Mammary epithelial cell (primary cell): ENCODE measurements at regions of chr9 and their contacts with region 1.

Region 1: DNA sequence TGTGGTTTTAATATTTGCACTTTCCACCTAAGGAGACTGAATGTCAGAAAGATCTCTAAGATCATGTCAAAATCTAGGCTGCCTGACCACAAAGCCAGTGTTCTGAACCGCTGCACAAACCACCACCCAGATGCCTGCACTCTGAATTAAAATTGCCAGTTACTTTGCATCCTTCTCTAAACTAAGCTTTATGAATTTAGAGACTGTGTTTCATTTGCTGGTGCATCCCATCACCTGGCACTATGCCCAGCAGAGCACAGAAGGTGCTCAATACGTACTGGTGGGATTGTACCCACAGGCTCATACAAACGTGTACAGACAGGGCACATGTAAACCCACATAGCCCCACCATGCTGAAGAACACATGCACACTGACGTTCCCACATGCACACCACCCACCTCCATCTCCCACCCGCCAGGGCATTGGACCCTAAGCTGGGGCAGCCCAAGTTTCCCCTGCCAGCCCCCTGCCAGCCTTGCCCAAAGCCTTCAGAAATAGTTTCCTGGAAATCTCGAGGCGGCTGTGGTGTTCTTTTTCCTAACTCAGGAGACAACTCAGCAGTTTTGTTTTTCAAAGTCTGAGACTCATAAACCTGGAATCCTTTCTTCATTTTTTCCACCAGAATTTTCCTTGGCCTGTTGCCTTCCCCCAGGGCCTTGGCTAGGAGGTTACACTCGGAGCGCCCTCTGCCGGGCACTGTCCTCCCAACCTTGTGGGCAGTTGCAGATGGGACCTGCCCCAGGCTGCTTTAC is 9.6 kb upstream of the TRAF1 start:
- DNase-seq: peak; percentile 89
- H3K4me3 ChIP-seq: peak overlapping the region; percentile 10 to 34 (median 16)
- H3K27ac ChIP-seq: peak overlapping the region; percentile 84
- H3K4me1 ChIP-seq: peaks cover 44% of the 10 kb centered on the region
- H3K27me3 ChIP-seq: no peaks in the 10 kb centered on the region
- CTCF ChIP-seq: peak; percentile 88 to 96

Region 2: GRCh38 chr9:120610975-120611689 is 325.1 kb before region 1 on chr9:
- CTCF ChIA-PET with region 1: interaction called, 3 read pairs
- dilution Hi-C with region 1: no loop called
- in situ Hi-C with region 1: loop called in 1 of 2 experiments (anchors 25 kb)
- intact Hi-C with region 1: loop called (anchors 1 kb)
- DNase-seq: peak; percentile 83
- H3K4me3 ChIP-seq: no peak overlapping the region
- H3K27ac ChIP-seq: peak overlapping the region; percentile 74
- H3K4me1 ChIP-seq: peaks cover 52% of the 10 kb centered on the region
- H3K27me3 ChIP-seq: no peaks in the 10 kb centered on the region
- CTCF ChIP-seq: peak; percentile 43 to 45

Region 3: GRCh38 chr9:120755827-120756434 is 180.3 kb before region 1 on chr9:
- CTCF ChIA-PET with region 1: interaction called, 13 read pairs
- dilution Hi-C with region 1: loop called (anchors 25 kb)
- in situ Hi-C with region 1: loop called (anchors 10 kb)
- intact Hi-C with region 1: loop called (anchors 1 kb)
- DNase-seq: peak; percentile 35
- H3K4me3 ChIP-seq: no peak overlapping the region
- H3K27ac ChIP-seq: no peak overlapping the region
- H3K4me1 ChIP-seq: no peaks in the 10 kb centered on the region
- H3K27me3 ChIP-seq: no peaks in the 10 kb centered on the region
- CTCF ChIP-seq: peak; percentile 87

Region 4: GRCh38 chr9:120868676-120869359 is 67.4 kb before region 1 on chr9:
- CTCF ChIA-PET with region 1: no interaction called
- dilution Hi-C with region 1: no loop called
- in situ Hi-C with region 1: no loop called
- intact Hi-C with region 1: loop called (anchors 1 kb)
- DNase-seq: peak; percentile 98
- H3K4me3 ChIP-seq: peak overlapping the region; percentile 48 to 85 (median 50)
- H3K27ac ChIP-seq: peak overlapping the region; percentile 34
- H3K4me1 ChIP-seq: peaks cover 23% of the 10 kb centered on the region
- H3K27me3 ChIP-seq: no peaks in the 10 kb centered on the region
- CTCF ChIP-seq: peak; percentile 6 to 64

Region 5: GRCh38 chr9:120916588-120916987 is 19.6 kb before region 1 on chr9:
- CTCF ChIA-PET with region 1: interaction called, 5 read pairs
- dilution Hi-C with region 1: no loop called
- in situ Hi-C with region 1: no loop called
- intact Hi-C with region 1: loop called (anchors 1 kb)
- DNase-seq: no peak
- H3K4me3 ChIP-seq: no peak overlapping the region
- H3K27ac ChIP-seq: no peak overlapping the region
- H3K4me1 ChIP-seq: peaks cover 20% of the 10 kb centered on the region
- H3K27me3 ChIP-seq: no peaks in the 10 kb centered on the region
- CTCF ChIP-seq: peak; percentile 18 to 44